ENCODE measurements at regions of chr7 and their contacts with region 1.

Region 1: GRCh38 chr7:79806161-79806734 is 328.4 kb upstream of the GNAI1 start:
- DNase-seq: no peak
- H3K4me3 ChIP-seq: no peak overlapping the region
- H3K27ac ChIP-seq: no peak overlapping the region
- H3K4me1 ChIP-seq: no peaks in the 10 kb centered on the region
- H3K27me3 ChIP-seq: no peaks in the 10 kb centered on the region
- CTCF ChIP-seq: no peak

Region 2: GRCh38 chr7:79622781-79623180 is 183.5 kb before region 1 on chr7:
- intact Hi-C with region 1: no loop called
- DNase-seq: no peak
- H3K4me3 ChIP-seq: no peak overlapping the region
- H3K27ac ChIP-seq: no peak overlapping the region
- H3K4me1 ChIP-seq: no peaks in the 10 kb centered on the region
- H3K27me3 ChIP-seq: no peaks in the 10 kb centered on the region
- CTCF ChIP-seq: no peak

Region 3: DNA sequence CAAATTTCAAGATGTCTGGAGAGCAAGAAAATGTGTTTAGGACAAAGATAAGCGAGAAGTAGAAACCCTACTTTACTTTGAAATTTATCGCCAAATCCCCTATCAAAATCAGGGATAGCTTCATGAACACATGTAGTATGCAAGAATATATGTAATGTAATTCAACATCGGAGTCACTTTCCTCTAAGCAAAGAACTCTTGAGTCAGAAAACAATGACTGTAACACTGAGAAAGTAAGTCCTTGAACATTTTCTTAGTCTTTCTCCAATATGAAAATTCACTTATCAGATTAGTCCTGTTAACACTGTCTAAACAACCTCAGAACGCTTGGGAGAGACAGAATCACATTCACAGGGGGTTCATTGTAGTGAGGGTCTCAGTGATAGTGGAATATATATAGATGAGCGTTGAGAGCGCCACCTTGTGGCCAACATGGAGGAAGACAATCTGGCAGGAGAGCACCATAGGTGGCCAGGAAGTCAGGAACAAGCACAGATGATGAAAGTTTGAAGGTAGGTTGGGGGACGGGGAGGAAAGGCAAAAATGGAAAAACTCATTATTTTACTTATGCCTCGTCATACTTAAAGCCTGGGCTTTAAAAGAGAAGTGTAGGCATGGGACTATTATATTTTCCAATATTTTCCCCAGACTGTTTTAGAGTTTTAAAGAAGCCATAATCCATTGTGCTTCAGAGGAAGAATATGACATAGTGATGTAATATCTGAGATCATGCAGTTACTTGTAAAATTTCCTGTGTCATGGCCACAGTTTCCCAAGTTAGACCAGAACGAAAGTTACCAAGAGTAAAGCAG is 212.9 kb after region 1 on chr7:
- intact Hi-C with region 1: loop called (anchors 10 kb)
- DNase-seq: peak; percentile 30
- H3K4me3 ChIP-seq: no peak overlapping the region
- H3K27ac ChIP-seq: no peak overlapping the region
- H3K4me1 ChIP-seq: no peaks in the 10 kb centered on the region
- H3K27me3 ChIP-seq: no peaks in the 10 kb centered on the region
- CTCF ChIP-seq: peak; percentile 82